Spleen (tissue), 13 donors: ENCODE measurements at regions of chr2 and their contacts with region 1.

Region 1: DNA sequence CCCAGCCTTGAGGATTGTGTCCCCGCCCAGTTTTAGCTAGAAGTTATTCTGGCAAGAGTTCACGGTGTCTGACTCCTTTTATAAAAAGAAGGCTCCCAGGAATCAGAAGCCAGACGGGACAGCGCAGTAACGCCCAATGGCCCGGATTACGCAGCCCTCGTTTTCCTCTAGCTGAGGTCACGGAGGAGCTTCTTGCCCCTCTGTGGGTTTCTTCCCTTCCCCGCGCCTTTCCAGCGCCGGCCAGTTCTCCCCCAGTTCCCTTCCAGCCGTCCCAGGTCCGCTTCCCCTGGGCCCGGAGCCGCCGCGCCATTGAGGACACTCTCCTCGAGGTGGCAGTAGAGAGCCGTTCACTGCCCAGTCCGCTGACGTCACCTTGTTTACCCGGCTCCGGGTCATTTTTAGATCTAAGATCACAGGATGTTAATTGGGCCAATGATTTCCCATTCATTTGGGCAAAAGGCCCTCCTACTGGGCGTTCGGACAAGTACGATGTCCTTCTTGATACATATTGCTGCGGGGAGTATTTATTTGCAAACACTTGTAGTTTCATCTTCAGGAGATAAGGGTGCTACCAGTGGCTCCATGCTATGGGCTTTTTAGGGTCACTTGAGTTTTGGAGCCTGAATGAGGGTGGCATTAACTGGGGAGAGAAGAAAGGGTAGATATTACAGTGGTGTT is 81.5 kb upstream of the PPM1B start:
- DNase-seq: peak; percentile 97
- H3K4me3 ChIP-seq: peak overlapping the region in 5 of 8 donors; percentile 15 to 64 (median 29)
- H3K27ac ChIP-seq: peak overlapping the region in 6 of 8 donors; percentile 48 to 78 (median 56)
- H3K4me1 ChIP-seq: peaks cover 0 to 33% (median 15%) of the 10 kb centered on the region in 6 donors
- H3K27me3 ChIP-seq: no peaks in the 10 kb centered on the region
- CTCF ChIP-seq: peak; percentile 89 to 99 (median 96)
- POLR2A ChIP-seq: no peak

Region 2: DNA sequence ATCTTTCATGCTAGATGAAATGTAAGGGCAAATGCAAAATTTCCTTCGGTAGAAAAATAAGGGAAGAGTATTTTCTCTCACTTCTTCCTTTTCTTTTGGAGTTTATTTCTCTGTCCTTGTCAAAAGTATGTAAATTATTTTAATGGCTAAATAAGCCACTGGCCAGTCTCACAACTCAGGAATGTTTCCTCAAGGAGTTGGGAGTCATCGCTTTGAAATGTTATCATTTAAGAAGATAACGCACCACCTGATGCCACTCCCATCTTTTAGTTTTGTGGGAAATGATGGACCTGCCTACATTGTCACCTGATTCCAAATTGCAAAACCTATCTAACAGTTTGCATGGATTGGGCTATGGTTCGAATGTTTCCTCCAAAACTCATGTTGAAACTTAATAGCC is 49.0 kb after region 1 on chr2:
- intact Hi-C with region 1: no loop called
- DNase-seq: no peak
- H3K4me3 ChIP-seq: no peak overlapping the region
- H3K27ac ChIP-seq: no peak overlapping the region
- H3K4me1 ChIP-seq: no peaks in the 10 kb centered on the region
- H3K27me3 ChIP-seq: no peaks in the 10 kb centered on the region
- CTCF ChIP-seq: no peak
- POLR2A ChIP-seq: no peak

Region 3: DNA sequence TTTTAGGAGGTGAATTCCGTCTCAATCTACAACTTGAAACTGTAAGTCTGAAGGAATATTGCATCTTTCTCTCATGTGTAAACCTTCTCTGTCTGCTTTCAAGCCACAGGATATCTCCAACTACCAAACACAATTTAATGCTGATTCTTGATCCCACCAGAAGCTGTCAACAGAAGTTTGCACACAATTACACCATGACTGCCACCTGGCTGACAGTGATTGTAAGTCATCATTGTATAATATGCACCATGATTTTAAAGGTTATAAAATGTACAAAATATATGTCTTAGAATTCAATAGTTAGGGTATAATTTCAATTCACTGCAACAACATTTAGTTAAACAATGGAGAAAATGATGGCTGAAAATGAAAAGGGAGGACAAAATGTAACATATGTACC is 255.7 kb after region 1 on chr2:
- intact Hi-C with region 1: loop called (anchors 5 kb)
- DNase-seq: no peak
- H3K4me3 ChIP-seq: no peak overlapping the region
- H3K27ac ChIP-seq: no peak overlapping the region
- H3K4me1 ChIP-seq: no peaks in the 10 kb centered on the region
- H3K27me3 ChIP-seq: no peaks in the 10 kb centered on the region
- CTCF ChIP-seq: peak in 2 of 11 experiments; percentile 7 to 31
- POLR2A ChIP-seq: no peak

Region 4: DNA sequence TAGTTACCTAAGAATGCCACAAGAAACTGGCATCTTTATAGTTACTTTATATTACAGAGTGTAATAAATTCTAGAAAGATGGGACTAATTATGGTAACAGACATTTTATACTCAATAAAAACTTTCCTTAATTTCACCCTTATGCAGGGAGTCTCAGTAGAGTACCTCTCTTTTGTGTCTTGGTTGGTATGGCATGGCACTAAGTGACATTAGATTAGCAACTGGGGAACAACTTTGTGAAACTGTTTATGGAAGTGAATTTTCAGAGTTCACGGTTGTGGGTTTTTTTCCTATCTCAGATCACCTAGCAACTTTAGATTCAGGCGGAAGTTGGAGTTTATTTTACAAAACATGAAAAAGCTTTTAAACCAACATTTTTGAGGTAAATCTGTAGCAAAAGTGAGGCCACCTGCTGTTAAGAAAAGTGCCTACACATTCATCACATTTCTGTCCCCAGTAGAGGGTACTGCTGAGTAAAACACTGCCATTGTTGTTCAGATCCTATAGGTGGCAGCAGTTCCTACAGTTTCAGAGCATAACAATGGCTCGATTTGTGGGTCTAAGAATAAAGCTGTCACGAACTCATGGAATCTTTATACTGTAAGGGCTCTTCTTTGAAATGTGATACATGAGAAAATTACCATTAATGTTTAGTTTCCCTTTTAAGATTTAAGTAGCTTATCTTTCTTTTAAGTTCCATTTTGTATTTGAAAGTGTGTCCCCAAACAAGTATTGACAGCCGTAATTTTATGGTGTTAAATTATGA is 392.1 kb after region 1 on chr2:
- intact Hi-C with region 1: loop called (anchors 5 kb)
- DNase-seq: no peak
- H3K4me3 ChIP-seq: no peak overlapping the region
- H3K27ac ChIP-seq: no peak overlapping the region
- H3K4me1 ChIP-seq: peaks cover 0 to 4% (median 0%) of the 10 kb centered on the region in 6 donors
- H3K27me3 ChIP-seq: no peaks in the 10 kb centered on the region
- CTCF ChIP-seq: peak; percentile 82 to 99 (median 94)
- POLR2A ChIP-seq: no peak